Dendritic cell treated with granulocyte-macrophage colony-stimulating factor and Interleukin-4, amounts not matched to agents 40 ng/mL and 50 ng/mL, for 4 days (primary cell): ENCODE measurements at regions of chr17 and their contacts with region 1.

Region 1: DNA sequence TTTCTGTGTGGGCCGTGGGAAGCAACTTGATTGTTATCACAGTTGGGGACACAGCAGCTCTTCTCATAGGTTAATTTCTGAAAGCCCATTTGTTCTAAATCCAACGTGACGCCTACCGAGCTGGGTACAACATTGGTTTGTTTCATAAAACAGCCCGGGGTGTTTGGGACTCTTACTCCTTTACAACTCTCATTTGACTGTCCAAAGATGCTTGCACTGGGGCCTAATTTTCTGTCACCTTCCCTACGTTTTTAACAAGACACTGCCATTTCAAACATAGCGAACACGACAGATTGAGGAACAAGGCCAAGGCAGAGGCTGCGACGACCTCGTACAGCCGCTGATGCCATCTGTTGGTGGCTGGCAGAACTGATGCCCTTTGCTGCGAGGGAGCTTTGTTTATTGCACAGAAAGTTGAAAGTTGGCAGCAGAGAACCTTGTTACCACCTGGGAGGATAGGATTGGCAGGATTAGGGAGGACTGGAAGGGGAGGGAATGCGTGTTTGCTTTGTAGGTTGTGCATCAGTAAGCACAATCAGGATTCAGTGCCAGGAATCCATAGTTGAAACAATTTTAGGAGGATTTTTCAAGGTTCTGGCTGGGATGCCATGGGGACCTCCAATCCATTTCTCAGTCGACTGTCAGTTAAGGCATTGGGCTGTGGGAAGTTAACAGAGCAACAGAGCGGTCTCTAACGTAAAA is 98.3 kb downstream of the PITPNC1 start:
- H3K4me3 Mint-ChIP-seq: no peak overlapping the region
- H3K27ac Mint-ChIP-seq: no peak overlapping the region
- H3K4me1 Mint-ChIP-seq: peaks cover 33% of the 10 kb centered on the region
- H3K27me3 Mint-ChIP-seq: no peaks in the 10 kb centered on the region

Region 2: GRCh38 chr17:67376737-67377487 is 98.5 kb before region 1 on chr17 and contains the start of gene PITPNC1:
- intact Hi-C with region 1: loop called (anchors 1 kb)
- H3K4me3 Mint-ChIP-seq: peak within 1 kb of the TSS; percentile 96
- H3K27ac Mint-ChIP-seq: peak within 1 kb of the TSS; percentile 91
- H3K4me1 Mint-ChIP-seq: peaks cover 26% of the 10 kb centered on the region
- H3K27me3 Mint-ChIP-seq: peaks cover 7% of the 10 kb centered on the region